ENCODE measurements at regions of chr4 and their contacts with region 1.

Region 1: DNA sequence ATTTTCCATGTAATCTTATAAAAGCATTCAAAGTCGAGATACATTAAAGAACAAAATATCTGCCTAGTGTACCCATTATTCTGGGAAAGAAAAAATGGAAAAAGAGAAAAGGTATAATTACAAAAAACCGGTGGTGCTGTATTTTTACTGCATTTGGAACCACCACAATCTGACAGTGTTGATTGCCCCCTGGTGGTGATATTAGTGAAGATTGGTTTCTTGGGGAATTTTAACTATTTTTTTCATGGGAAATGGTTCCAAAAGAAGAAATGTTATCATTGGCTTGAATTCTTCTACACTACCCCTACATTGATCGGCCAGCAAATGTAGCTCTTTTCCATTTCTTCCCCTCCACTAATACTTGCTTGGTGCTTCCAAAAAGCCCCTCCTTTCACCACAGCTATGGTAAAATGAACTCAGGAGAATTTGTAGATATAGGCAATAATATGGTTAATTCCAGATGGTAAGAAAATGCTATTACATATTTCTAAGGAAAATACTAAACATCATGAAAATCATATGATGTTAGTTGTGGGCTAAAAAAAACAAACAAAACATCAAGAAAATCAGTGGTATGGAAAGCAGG is 50.0 kb downstream of the COX18 start:
- DNase-seq: peak in 2 of 9 experiments; percentile 34 to 47
- ATAC-seq: no peak
- H3K4me3 ChIP-seq: no peak overlapping the region
- H3K4me3 Mint-ChIP-seq: no peak overlapping the region
- H3K27ac ChIP-seq: no peak overlapping the region
- H3K27ac Mint-ChIP-seq: no peak overlapping the region
- H3K4me1 ChIP-seq: no peaks in the 10 kb centered on the region
- H3K4me1 Mint-ChIP-seq: no peaks in the 10 kb centered on the region
- H3K27me3 ChIP-seq: no peaks in the 10 kb centered on the region
- H3K27me3 Mint-ChIP-seq: peaks cover 10% of the 10 kb centered on the region
- CTCF ChIP-seq: peak; percentile 75

Region 2: DNA sequence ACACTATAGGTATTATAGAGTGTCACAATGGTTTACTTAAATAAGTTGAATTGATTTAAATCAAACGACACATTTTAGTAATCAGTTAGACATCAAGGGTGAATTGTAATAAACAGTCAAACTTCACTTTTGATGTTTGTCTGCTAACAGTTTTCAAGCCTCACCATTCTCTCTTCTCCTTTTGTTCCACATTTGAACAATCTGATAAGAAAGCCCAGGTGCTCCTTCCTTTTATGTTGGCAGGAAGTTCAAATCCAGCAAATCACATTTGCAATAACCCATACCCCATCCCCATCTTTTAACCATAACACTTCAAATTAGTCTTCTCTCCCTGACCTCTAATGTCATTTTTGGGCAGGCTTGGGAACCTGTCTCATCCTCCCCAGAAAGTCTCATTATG is 1172.3 kb before region 1 on chr4:
- CTCF ChIA-PET with region 1: no interaction called
- POLR2A ChIA-PET with region 1: no interaction called
- intact Hi-C with region 1: no loop called
- DNase-seq: no peak
- ATAC-seq: no peak
- H3K4me3 ChIP-seq: no peak overlapping the region
- H3K4me3 Mint-ChIP-seq: no peak overlapping the region
- H3K27ac ChIP-seq: no peak overlapping the region
- H3K27ac Mint-ChIP-seq: no peak overlapping the region
- H3K4me1 ChIP-seq: no peaks in the 10 kb centered on the region
- H3K4me1 Mint-ChIP-seq: no peaks in the 10 kb centered on the region
- H3K27me3 ChIP-seq: no peaks in the 10 kb centered on the region
- H3K27me3 Mint-ChIP-seq: no peaks in the 10 kb centered on the region
- CTCF ChIP-seq: no peak

Region 3: GRCh38 chr4:72295966-72296557 is 723.5 kb before region 1 on chr4:
- CTCF ChIA-PET with region 1: no interaction called
- POLR2A ChIA-PET with region 1: no interaction called
- intact Hi-C with region 1: loop called in 1 of 2 experiments (anchors 5 kb)
- DNase-seq: peak in 2 of 9 experiments; percentile 15 to 17
- ATAC-seq: no peak
- H3K4me3 ChIP-seq: no peak overlapping the region
- H3K4me3 Mint-ChIP-seq: no peak overlapping the region
- H3K27ac ChIP-seq: no peak overlapping the region
- H3K27ac Mint-ChIP-seq: no peak overlapping the region
- H3K4me1 ChIP-seq: no peaks in the 10 kb centered on the region
- H3K4me1 Mint-ChIP-seq: no peaks in the 10 kb centered on the region
- H3K27me3 ChIP-seq: no peaks in the 10 kb centered on the region
- H3K27me3 Mint-ChIP-seq: peaks cover 8% of the 10 kb centered on the region
- CTCF ChIP-seq: no peak

Region 4: GRCh38 chr4:72326692-72327632 is 692.6 kb before region 1 on chr4:
- CTCF ChIA-PET with region 1: no interaction called
- POLR2A ChIA-PET with region 1: no interaction called
- intact Hi-C with region 1: loop called in 1 of 2 experiments (anchors 10 kb)
- DNase-seq: peak in 2 of 9 experiments; percentile 1 to 12
- ATAC-seq: no peak
- H3K4me3 ChIP-seq: no peak overlapping the region
- H3K4me3 Mint-ChIP-seq: no peak overlapping the region
- H3K27ac ChIP-seq: no peak overlapping the region
- H3K27ac Mint-ChIP-seq: no peak overlapping the region
- H3K4me1 ChIP-seq: no peaks in the 10 kb centered on the region
- H3K4me1 Mint-ChIP-seq: no peaks in the 10 kb centered on the region
- H3K27me3 ChIP-seq: no peaks in the 10 kb centered on the region
- H3K27me3 Mint-ChIP-seq: peaks cover 4% of the 10 kb centered on the region
- CTCF ChIP-seq: no peak

Region 5: DNA sequence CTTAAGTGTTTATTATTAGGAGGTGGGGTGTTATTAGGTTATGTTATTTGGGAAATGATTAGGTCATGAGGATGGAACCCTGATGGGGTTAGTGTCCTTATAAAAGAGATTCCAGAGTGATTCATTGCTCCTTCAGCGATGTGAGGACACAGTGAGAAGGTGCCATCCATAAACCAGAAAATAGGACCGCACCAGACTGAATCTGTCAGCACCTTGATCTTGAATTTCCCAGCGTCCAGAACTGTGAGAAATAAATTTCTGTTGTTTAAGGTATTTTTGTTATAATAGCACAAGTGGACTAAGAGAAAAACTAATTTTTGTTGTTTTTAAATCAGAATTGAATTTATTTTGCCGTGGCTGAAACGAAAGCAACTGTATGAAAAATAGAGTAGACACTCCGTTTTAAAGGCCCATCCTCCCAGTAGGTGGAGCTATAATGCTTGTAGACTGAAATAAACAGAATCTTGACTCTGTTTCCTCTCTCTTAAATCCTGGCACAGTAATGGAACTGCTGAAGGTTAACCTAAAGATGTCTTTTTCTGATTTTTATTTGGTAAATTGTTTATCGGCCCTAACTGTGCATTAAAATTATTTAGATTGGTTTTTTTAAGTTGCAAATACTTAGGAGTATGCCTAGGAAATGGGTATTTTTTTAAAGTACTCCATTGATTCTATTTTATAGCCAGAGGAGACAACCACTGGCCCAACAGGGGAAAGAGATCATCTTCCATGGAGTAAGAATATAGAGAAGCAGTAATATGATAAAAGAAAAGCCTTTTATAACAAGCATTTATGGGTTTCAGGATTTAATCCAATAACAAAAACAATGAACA is 317.4 kb before region 1 on chr4:
- CTCF ChIA-PET with region 1: no interaction called
- POLR2A ChIA-PET with region 1: no interaction called
- intact Hi-C with region 1: loop called (anchors 2 to 10 kb)
- DNase-seq: peak in 2 of 9 experiments; percentile 41 to 51
- ATAC-seq: no peak
- H3K4me3 ChIP-seq: peak overlapping the region; percentile 21 to 25
- H3K4me3 Mint-ChIP-seq: peak overlapping the region; percentile 79
- H3K27ac ChIP-seq: no peak overlapping the region
- H3K27ac Mint-ChIP-seq: no peak overlapping the region
- H3K4me1 ChIP-seq: no peaks in the 10 kb centered on the region
- H3K4me1 Mint-ChIP-seq: peaks cover 3% of the 10 kb centered on the region
- H3K27me3 ChIP-seq: no peaks in the 10 kb centered on the region
- H3K27me3 Mint-ChIP-seq: peaks cover 2% of the 10 kb centered on the region
- CTCF ChIP-seq: no peak

Region 6: GRCh38 chr4:72761368-72762038 is 258.1 kb before region 1 on chr4:
- CTCF ChIA-PET with region 1: no interaction called
- POLR2A ChIA-PET with region 1: no interaction called
- intact Hi-C with region 1: no loop called
- DNase-seq: no peak
- ATAC-seq: no peak
- H3K4me3 ChIP-seq: no peak overlapping the region
- H3K4me3 Mint-ChIP-seq: no peak overlapping the region
- H3K27ac ChIP-seq: no peak overlapping the region
- H3K27ac Mint-ChIP-seq: no peak overlapping the region
- H3K4me1 ChIP-seq: no peaks in the 10 kb centered on the region
- H3K4me1 Mint-ChIP-seq: no peaks in the 10 kb centered on the region
- H3K27me3 ChIP-seq: no peaks in the 10 kb centered on the region
- H3K27me3 Mint-ChIP-seq: peaks cover 3% of the 10 kb centered on the region
- CTCF ChIP-seq: no peak

Region 7: DNA sequence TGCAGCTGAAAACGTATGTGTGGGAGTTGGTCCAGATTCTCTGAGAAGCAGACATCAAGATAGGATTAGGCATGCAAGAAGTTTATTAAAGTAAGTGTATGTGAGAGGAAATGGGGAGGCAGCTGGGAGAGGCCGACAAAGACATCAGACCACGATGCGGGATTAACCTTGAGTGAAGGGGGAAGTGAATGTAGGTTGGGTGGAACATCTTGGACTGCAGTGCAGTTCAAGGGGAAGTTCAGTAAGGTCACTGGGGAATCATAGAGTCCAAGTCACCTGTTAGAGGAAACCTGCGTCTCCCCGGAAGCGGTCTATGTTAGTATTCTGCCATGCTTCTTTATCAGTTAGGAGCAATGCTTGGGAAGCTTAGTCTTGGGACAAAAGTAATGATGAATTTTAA is 742.9 kb after region 1 on chr4:
- CTCF ChIA-PET with region 1: no interaction called
- POLR2A ChIA-PET with region 1: no interaction called
- intact Hi-C with region 1: no loop called
- DNase-seq: no peak
- ATAC-seq: no peak
- H3K4me3 ChIP-seq: no peak overlapping the region
- H3K4me3 Mint-ChIP-seq: no peak overlapping the region
- H3K27ac ChIP-seq: no peak overlapping the region
- H3K27ac Mint-ChIP-seq: no peak overlapping the region
- H3K4me1 ChIP-seq: no peaks in the 10 kb centered on the region
- H3K4me1 Mint-ChIP-seq: no peaks in the 10 kb centered on the region
- H3K27me3 ChIP-seq: no peaks in the 10 kb centered on the region
- H3K27me3 Mint-ChIP-seq: no peaks in the 10 kb centered on the region
- CTCF ChIP-seq: no peak

Measured in CD8-positive, alpha-beta T cell (primary cell).